Tibial artery (tissue), 4 donors: ENCODE measurements at regions of chr19 and their contacts with region 1.

Region 1: DNA sequence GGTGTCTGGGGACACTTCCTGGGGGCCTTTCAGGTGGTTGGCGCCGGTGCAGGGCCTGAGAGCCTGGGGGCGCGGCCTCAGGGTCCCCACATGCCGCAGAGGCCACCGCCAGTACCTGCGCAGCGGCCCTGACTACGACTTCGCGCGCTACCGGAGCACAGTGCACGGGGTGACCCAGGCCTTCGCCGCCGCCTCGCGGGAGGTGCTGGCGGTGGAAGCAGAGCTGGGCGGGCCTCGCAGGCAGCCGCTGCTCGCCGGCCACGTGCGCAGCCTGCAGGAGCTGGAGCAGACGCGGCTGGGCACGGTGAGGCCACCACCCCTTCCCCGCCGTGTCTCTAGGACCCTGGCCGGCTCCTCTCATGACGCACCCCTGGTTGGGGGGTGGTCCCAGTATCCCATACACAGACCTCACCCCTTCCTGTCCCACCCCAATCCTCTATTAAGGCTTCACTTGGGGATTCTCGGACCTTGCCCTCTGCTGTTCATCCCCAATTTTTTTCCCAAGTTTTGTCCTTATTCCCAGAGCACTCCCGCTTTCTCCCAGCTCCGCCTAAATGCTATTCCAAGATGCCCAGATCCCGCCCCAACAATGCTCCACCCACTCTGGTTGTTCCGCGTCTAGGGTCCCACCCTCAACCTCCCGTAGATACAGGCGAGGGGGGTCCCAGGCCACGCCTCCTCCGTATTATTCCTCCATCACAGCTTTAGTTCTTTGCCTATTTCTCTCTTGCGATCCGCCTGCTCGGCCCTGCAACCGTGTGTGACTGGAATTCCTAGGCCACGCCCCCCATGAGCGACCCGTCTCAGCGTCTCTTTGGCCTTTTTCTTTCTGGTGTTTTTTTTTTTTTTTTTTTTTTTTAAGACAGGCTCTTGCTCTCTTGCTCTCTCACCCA is 1.0 kb downstream of the REX1BD start:
- DNase-seq: peak; percentile 72 to 88
- H3K4me3 ChIP-seq: peak overlapping the region; percentile 72 to 75
- H3K27ac ChIP-seq: peak overlapping the region; percentile 77 to 84
- H3K4me1 ChIP-seq: peaks cover 0 to 33% (median 26%) of the 10 kb centered on the region in 4 donors
- H3K27me3 ChIP-seq: no peaks in the 10 kb centered on the region
- CTCF ChIP-seq: peak; percentile 35 to 50

Region 2: DNA sequence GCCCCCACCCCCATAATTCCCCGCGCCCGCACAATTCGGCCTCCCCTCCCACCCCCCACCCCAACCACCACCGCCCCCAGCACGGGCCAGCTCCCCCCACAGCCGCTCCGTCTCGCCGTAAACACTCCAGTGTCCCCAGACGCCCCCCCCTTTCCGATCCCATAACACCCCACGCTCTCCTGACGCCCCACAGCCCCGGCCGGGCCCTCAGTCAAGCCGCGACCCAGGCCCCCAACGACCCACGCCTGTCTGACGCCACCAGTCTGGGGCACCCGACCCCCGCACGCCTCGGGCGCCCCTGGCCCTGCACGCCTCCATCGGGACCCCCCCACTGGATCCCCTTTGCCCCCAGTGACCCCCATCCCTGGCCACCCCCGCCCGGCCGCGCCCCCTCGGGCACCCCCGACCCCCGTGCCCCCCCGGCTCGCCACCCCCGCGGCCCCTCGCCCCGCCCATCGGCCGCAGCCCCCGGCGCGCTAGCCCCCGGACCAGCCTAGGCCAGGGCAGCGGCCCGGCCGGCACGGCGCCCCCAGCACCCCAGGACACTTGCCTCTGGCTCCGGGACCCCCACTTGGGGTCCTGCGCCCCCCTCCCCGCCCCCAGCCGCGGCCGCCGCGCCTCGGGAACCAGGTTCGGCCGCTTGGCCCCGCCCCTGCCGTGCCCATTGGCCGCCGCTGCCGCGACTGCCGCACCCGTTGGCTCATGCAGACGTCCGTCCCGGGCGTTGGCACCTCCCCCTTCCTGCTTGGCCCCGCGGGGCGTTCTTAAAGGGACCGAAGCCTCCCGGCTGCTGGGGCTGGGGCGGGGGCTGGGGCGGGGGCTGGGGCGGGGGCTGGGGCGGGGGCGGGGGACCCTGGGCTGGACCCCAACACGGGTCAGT is 46.5 kb before region 1 on chr19 and contains the start of gene FKBP8:
- intact Hi-C with region 1: no loop called
- DNase-seq: peak; percentile 93 to 96
- H3K4me3 ChIP-seq: peak within 1 kb of the TSS; percentile 95 to 99
- H3K27ac ChIP-seq: peak within 1 kb of the TSS; percentile 92 to 96
- H3K4me1 ChIP-seq: peaks cover 0 to 27% (median 18%) of the 10 kb centered on the region in 4 donors
- H3K27me3 ChIP-seq: peaks cover 0 to 2% of the 10 kb centered on the region in 2 donors
- CTCF ChIP-seq: no peak

Region 3: DNA sequence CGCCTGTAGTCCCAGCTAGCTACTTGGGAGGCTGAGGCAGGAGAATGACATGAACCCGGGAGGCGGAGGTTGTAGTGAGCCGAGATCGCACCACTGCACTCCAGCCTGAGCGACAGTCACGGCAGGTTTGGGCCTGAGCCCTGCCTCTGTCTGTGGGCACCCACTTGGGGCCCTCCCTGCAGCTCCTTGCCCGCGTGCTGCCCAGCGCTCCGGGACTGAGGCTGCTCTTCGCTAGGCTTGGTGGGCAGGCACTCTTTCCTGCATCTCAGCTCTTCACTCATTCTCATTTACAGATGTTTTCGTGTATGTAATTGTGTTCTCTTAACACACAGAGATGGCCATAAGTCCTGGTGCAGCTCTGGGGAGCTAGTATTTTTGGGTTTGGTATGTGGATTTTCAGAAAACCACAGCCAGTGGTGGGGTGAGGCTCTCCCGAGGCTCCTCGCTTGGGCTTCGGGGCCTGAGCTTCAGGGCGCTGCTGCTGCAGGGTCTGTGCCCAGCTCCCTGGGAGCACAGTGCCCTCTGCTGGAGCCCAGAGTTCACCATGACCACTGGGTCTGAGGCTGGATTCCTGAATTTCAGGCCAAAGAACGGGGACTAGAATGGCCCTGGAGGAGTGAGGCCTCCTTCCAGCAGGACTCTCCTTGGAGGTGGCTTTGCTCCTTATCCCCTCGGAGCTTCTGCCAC is 257.4 kb after region 1 on chr19:
- intact Hi-C with region 1: loop called (anchors 10 kb)
- DNase-seq: peak; percentile 82 to 87
- H3K4me3 ChIP-seq: no peak overlapping the region
- H3K27ac ChIP-seq: peak overlapping the region; percentile 83 to 84
- H3K4me1 ChIP-seq: peaks cover 0 to 73% (median 57%) of the 10 kb centered on the region in 4 donors
- H3K27me3 ChIP-seq: no peaks in the 10 kb centered on the region
- CTCF ChIP-seq: peak; percentile 80 to 81